GM10248 (cell line): ENCODE measurements at regions of chr22 and their contacts with region 1.

Region 1: GRCh38 chr22:36546092-36546804 is 17.3 kb upstream of the EIF3D start:
- DNase-seq: peak; percentile 65
- CTCF ChIP-seq: peak; percentile 58

Region 2: GRCh38 chr22:36775964-36776669 is 229.9 kb after region 1 on chr22 and contains the start of gene IFT27:
- CTCF ChIA-PET with region 1: interaction called, 12 read pairs
- POLR2A ChIA-PET with region 1: no interaction called
- DNase-seq: peak; percentile 100
- CTCF ChIP-seq: no peak